ENCODE measurements at regions of chr10 and their contacts with region 1.

Region 1: GRCh38 chr10:93471110-93471651 is 11.0 kb downstream of the MYOF start:
- DNase-seq: peak; percentile 97
- ATAC-seq: peak; percentile 55
- H3K4me3 ChIP-seq: no peak overlapping the region
- H3K27ac ChIP-seq: peak overlapping the region; percentile 99
- H3K4me1 ChIP-seq: peaks cover 37% of the 10 kb centered on the region
- H3K27me3 ChIP-seq: no peaks in the 10 kb centered on the region
- CTCF ChIP-seq: no peak
- POLR2A ChIP-seq: 0 out of 2 replicates have a peak, but pooled peaks have one; percentile 26
- RAD21 ChIP-seq: no peak

Region 2: DNA sequence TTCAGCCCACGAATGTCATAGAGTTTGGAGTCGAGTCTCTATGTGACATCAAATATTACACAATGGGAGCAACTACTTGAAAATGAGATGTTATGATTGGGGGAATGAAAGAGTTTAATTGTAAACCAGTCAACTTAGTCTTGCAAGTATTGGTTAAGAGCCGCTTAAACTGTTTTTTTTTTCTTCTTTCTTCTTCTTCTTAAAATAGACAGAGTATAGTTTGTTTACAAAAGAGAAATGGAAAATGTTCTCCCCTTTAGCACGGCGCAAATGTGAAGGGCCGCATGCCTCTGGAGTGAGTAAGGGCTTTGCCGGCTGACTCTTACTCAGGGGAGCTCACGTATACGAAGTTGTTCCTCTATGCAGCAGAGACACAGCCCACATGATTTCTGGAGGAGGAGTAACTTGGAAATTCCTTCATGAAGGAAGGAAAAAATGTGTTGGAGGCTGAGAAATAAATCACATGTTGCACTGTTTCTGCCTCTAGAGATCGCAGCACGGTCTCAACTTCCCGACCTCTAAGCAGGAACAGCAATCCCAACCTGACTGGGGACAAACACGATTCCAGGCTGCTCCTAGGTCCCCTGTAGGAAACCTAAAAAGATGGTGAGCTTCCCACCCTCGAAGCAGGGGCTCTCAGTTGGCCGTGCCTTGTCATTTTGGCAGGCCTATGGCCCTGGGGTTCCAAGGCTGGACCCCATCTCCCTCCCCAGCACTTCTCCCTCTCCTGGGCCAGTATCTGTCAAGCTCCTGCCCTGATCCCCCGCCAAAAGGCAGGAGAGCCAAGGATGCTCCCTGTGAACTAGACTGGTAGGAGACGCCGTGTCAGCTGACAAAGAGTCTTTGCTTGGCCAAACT is 33.9 kb before region 1 on chr10:
- CTCF ChIA-PET with region 1: interaction called, 3 read pairs
- POLR2A ChIA-PET with region 1: interaction called, 11 read pairs
- dilution Hi-C with region 1: no loop called
- in situ Hi-C with region 1: no loop called
- intact Hi-C with region 1: no loop called
- DNase-seq: peak; percentile 99
- ATAC-seq: peak; percentile 91
- H3K4me3 ChIP-seq: no peak overlapping the region
- H3K27ac ChIP-seq: peak overlapping the region; percentile 91
- H3K4me1 ChIP-seq: peaks cover 35% of the 10 kb centered on the region
- H3K27me3 ChIP-seq: no peaks in the 10 kb centered on the region
- CTCF ChIP-seq: no peak; the same call in 1 of the 2 replicates
- POLR2A ChIP-seq: peak; percentile 35
- RAD21 ChIP-seq: peak; percentile 4; the same call in 1 of the 2 replicates